ENCODE measurements at regions of chr12 and their contacts with region 1.

Region 1: DNA sequence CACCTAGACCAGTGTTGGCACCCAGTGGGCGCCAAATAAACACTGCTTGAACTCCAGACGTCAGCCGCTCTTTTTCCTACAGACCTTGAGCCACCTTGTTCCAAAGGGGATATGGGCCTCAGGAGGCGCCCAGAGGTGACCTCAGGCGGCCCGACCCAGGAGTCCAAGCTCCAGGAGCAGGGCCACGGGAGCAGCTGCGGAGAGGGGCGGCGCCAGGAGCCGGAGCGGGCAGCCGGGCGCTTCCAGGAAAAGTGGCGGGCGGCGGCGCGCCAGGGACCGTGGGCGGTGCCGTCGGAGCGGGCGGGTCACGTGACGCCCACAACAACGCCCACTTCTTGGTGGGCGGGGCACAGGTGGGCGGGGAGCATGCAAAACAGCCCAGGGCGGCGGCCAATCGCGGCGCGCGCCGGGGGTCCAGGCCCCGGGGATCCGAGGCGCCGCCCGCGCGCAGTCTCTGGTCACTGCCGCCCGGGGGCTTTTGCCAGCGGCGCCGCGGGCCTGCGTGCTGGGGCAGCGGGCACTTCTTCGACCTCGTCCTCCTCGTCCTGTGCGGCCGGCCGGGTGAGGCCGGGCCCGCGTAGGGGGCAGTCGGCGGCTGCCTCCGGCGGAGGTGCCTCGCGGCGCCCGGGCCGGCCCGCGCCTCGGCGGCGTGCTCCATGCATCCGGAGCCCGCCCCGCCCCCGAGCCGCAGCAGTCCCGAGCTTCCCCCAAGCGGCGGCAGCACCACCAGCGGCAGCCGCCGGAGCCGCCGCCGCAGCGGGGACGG is at the start of gene ORAI1:
- DNase-seq: peak; percentile 83 to 98 (median 95)

Region 2: DNA sequence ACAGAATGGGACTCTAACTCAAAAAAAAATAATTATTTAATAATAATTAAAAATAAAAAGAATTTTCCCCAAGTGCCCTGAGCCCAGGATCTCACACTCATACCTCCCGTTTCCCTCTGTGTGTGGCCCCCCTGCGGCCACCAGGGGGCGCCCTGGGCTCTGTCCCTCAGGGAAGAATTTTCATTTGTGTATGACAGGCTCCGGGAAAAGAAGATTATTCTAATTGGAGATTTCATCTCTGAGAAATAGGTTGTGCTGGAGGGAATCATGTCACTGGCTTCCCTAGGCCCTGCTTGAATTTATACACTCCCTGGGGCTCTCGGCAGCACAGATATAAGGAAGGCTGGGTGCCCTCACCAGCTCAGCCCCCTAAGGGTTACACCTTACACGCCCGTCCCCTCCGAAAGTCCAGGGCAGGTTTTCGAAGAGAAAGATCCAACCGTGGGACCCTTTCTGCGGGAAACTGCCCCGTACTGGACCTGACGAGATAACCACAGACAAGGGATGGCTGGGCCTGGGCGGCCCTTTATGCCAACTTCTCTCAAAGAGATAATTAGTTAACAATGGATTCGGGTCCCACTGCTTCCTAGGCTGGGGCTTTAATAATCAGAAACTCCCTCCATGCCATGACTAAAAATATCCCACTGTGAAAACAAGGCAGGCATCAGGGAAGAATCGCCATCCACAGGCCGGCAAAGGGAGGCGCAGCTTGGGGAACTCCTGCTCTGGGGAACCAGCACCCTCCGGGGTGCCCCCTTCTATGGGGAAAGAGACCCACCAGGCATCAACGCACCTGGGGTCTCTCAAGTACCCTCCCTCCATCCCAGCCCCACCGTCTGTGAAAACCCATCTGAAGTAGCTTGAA is 126.1 kb before region 1 on chr12:
- intact Hi-C with region 1: loop called (anchors 5 kb)
- DNase-seq: peak; percentile 40 to 95 (median 87)

Region 3: DNA sequence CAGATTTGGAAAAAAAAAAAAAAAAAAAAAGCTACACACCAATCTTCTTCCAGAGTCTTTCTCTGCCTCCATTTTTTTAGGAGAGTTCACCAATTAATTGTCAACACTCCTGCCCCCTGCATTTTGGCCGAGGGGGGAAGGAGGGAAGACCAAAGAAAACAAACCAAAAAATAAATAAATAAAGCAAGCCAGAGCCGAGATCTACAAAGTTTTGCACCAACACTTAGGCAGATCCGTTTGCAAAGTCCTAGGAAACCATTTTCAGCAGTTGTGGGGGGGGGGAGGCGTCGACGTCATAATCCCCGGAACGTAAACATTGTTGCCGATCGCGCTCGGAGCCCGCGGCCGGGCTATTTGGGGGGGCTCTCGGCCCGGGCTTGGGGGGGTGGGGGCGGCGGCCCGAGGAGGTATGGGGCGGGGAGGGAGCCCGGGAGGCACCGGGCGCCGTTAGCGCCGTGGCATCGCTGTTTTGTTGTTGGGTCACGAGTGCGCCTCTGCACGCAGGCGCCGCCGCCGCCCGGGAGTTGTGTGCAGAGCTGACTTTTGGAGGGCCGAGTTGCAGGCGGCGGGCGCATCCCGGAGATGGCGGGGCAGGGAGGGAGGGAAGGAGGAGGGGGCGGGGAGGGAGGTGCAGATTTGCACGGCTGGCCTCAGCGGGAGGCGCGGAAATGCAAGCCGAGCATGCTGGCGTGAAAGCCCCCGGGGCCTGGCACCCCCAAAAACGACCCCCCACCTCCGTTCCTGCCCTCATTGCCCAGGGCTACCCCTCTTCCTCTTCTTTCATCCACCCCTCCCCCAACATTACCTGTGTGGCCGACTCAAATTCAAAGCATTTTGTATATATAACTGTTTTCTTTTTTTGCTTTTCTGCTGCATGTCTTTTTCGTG is 46.0 kb before region 1 on chr12:
- intact Hi-C with region 1: loop called (anchors 5 kb)
- DNase-seq: peak; percentile 62 to 90 (median 80)

Region 4: GRCh38 chr12:121678716-121679580 is 52.7 kb after region 1 on chr12:
- intact Hi-C with region 1: loop called (anchors 5 kb)
- DNase-seq: no peak